HepG2 (cell line): ENCODE measurements at regions of chr11 and their contacts with region 1.

Region 1: GRCh38 chr11:45252134-45252855 is 33.8 kb downstream of the SYT13 start:
- DNase-seq: peak; percentile 35
- ATAC-seq: peak; percentile 99
- H3K4me3 ChIP-seq: no peak overlapping the region
- H3K27ac ChIP-seq: no peak overlapping the region
- H3K4me1 ChIP-seq: no peaks in the 10 kb centered on the region
- H3K27me3 ChIP-seq: peaks cover 2 to 21% of the 10 kb centered on the region in 2 experiments; a peak in 2 of 5 replicates
- CTCF ChIP-seq: peak; percentile 90
- EP300 ChIP-seq: no peak
- POLR2A ChIP-seq: no peak
- RAD21 ChIP-seq: peak; percentile 68

Region 2: DNA sequence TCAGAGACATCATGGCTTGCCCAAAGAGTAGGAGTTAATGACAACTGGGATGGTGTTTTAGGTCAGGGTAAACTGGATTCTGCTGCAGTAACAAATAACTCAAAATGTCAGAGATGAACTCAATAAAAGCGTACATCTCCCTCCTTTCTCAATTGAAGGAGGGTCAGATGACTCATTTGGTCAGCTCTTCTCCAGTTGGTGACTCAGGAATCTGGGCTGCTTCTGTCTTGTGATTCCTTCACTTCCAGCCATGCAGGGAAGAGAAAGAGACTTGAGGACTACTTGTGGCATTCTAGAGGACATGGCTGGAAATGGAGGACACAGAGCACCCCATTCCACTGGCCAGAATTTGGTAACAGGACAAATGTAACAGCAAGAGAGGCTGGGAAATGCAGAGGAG is 37.1 kb after region 1 on chr11:
- CTCF ChIA-PET with region 1: interaction called, 13 read pairs
- POLR2A ChIA-PET with region 1: no interaction called
- in situ Hi-C with region 1: loop called (anchors 5 kb)
- intact Hi-C with region 1: loop called (anchors 1 kb)
- DNase-seq: no peak
- ATAC-seq: no peak
- H3K4me3 ChIP-seq: no peak overlapping the region
- H3K27ac ChIP-seq: no peak overlapping the region
- H3K4me1 ChIP-seq: no peaks in the 10 kb centered on the region
- H3K27me3 ChIP-seq: peaks cover 4 to 27% of the 10 kb centered on the region in 2 experiments; a peak in 4 of 5 replicates
- CTCF ChIP-seq: no peak
- EP300 ChIP-seq: no peak
- POLR2A ChIP-seq: no peak
- RAD21 ChIP-seq: no peak

Region 3: GRCh38 chr11:45294499-45294898 is 42.2 kb after region 1 on chr11:
- CTCF ChIA-PET with region 1: interaction called, 13 read pairs
- POLR2A ChIA-PET with region 1: no interaction called
- in situ Hi-C with region 1: loop called (anchors 5 kb)
- intact Hi-C with region 1: loop called (anchors 1 kb)
- DNase-seq: no peak
- ATAC-seq: no peak
- H3K4me3 ChIP-seq: no peak overlapping the region
- H3K27ac ChIP-seq: no peak overlapping the region
- H3K4me1 ChIP-seq: no peaks in the 10 kb centered on the region
- H3K27me3 ChIP-seq: no peaks in the 10 kb centered on the region; a peak in 2 of 5 replicates
- CTCF ChIP-seq: no peak
- EP300 ChIP-seq: no peak
- POLR2A ChIP-seq: no peak
- RAD21 ChIP-seq: no peak

Region 4: GRCh38 chr11:45332276-45332934 is 80.1 kb after region 1 on chr11:
- CTCF ChIA-PET with region 1: no interaction called
- POLR2A ChIA-PET with region 1: no interaction called
- in situ Hi-C with region 1: no loop called
- intact Hi-C with region 1: loop called (anchors 2 kb)
- DNase-seq: peak; percentile 24
- ATAC-seq: peak; percentile 74
- H3K4me3 ChIP-seq: no peak overlapping the region
- H3K27ac ChIP-seq: no peak overlapping the region
- H3K4me1 ChIP-seq: no peaks in the 10 kb centered on the region
- H3K27me3 ChIP-seq: peaks cover 0 to 10% of the 10 kb centered on the region in 2 experiments; a peak in 2 of 5 replicates
- CTCF ChIP-seq: peak; percentile 66
- EP300 ChIP-seq: no peak
- POLR2A ChIP-seq: no peak
- RAD21 ChIP-seq: no peak

Region 5: DNA sequence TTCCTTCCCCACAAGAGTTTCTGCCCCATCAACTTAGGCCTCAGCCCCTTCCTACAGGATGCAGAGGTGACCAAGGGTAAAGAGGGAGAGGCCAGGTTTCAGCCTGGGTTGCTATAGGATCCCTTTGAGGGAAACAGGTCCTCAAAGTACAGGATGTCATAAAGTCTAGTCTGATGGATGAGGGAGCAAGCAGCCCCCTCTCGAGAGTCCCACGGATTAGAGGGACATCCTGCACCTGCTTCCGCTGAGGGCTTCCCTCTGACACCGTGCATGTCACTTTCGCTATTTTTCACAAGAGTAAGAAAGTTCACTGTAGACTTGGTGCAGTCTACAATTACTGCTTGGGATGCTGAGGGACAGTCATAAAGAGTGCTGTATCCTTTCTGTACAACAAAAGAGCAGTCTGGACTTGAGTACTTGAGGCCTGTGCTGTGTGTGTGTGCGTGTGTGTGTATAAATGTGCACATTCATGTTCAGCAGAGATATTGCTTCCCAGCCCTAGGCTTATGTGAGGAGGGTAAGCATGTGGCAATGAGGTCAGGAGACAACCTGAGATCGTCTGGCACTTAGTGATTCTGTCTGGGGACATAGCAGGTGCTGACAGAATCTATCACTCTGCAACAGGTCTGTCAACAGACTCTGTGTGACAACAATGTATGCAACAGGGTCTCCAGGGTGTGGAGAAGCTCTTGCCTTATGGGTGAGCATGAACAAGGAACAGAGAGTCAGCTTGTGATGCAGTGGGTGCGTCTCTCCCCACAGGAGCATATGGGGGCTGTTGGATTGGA is 431.2 kb after region 1 on chr11:
- CTCF ChIA-PET with region 1: no interaction called
- POLR2A ChIA-PET with region 1: no interaction called
- in situ Hi-C with region 1: no loop called
- intact Hi-C with region 1: no loop called
- DNase-seq: no peak
- ATAC-seq: no peak
- H3K4me3 ChIP-seq: no peak overlapping the region
- H3K27ac ChIP-seq: no peak overlapping the region
- H3K4me1 ChIP-seq: no peaks in the 10 kb centered on the region
- H3K27me3 ChIP-seq: peaks cover 3 to 41% of the 10 kb centered on the region in 2 experiments; a peak in 3 of 5 replicates
- CTCF ChIP-seq: no peak
- EP300 ChIP-seq: no peak
- POLR2A ChIP-seq: no peak
- RAD21 ChIP-seq: no peak